ENCODE measurements at regions of chr20 and their contacts with region 1.

Region 1: GRCh38 chr20:45283548-45284057 is 23.0 kb upstream of the RBPJL start:
- DNase-seq: no peak
- ATAC-seq: no peak
- H3K4me3 ChIP-seq: no peak overlapping the region
- H3K27ac ChIP-seq: no peak overlapping the region
- H3K4me1 ChIP-seq: no peaks in the 10 kb centered on the region
- H3K27me3 ChIP-seq: no peaks in the 10 kb centered on the region
- CTCF ChIP-seq: no peak

Region 2: DNA sequence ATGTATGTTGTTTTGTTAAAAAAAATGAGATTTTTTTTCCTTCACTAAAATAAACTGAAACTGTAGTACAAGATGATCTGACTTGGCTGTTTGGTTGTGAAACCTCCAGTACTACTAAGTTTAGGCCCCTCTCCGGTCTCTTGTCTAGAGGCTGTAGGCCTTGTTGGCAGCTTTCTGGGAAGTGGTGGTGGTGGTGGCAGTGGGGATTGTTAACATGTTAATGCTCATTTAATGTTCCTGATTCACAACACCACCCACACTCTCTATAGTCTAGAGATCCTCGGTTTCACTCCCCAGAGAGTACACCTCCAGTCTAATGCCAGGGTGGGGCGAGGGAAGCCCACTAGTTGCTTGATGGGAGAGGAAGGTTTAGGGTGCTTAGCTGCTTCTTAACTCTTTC is 293.2 kb before region 1 on chr20:
- intact Hi-C with region 1: no loop called
- DNase-seq: no peak
- ATAC-seq: peak in 2 of 4 donors; percentile 23 to 35
- H3K4me3 ChIP-seq: no peak overlapping the region
- H3K27ac ChIP-seq: no peak overlapping the region
- H3K4me1 ChIP-seq: peaks cover 0 to 7% (median 0%) of the 10 kb centered on the region in 3 donors
- H3K27me3 ChIP-seq: no peaks in the 10 kb centered on the region
- CTCF ChIP-seq: no peak

Region 3: DNA sequence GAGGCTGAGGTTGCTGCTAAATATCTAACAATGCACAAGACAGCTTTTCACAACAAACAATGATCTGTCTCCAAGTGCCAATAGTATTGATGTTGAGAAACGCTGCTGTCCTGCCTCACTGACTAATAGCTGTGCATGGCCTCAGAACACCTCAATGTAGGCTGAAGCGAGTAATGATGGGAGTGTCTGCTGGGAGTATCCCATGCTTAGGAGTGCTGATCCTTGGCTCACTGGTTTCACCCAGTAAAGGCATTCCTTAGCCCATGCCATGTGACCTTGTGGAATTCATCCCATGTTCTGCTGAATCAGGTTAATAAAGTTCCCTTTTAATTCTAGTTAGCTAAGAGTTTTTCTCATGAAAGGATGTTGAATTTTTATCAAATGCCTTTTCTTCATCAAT is 155.5 kb before region 1 on chr20:
- intact Hi-C with region 1: loop called in 1 of 3 experiments (anchors 10 kb)
- DNase-seq: no peak
- ATAC-seq: no peak
- H3K4me3 ChIP-seq: no peak overlapping the region
- H3K27ac ChIP-seq: no peak overlapping the region
- H3K4me1 ChIP-seq: no peaks in the 10 kb centered on the region
- H3K27me3 ChIP-seq: no peaks in the 10 kb centered on the region
- CTCF ChIP-seq: no peak

Region 4: GRCh38 chr20:45206746-45207145 is 76.9 kb before region 1 on chr20 and contains the start of gene SEMG1:
- intact Hi-C with region 1: no loop called
- DNase-seq: no peak
- ATAC-seq: no peak
- H3K4me3 ChIP-seq: no peak within 1 kb of the TSS
- H3K27ac ChIP-seq: no peak within 1 kb of the TSS
- H3K4me1 ChIP-seq: no peaks in the 10 kb centered on the region
- H3K27me3 ChIP-seq: peaks cover 0 to 4% (median 0%) of the 10 kb centered on the region in 4 donors
- CTCF ChIP-seq: no peak
- total RNA-seq, gene SEMG1: not detected

Measured in pancreas (tissue), 10 donors.